Right cardiac atrium (tissue), 5 donors: ENCODE measurements at regions of chr16 and their contacts with region 1.

Region 1: DNA sequence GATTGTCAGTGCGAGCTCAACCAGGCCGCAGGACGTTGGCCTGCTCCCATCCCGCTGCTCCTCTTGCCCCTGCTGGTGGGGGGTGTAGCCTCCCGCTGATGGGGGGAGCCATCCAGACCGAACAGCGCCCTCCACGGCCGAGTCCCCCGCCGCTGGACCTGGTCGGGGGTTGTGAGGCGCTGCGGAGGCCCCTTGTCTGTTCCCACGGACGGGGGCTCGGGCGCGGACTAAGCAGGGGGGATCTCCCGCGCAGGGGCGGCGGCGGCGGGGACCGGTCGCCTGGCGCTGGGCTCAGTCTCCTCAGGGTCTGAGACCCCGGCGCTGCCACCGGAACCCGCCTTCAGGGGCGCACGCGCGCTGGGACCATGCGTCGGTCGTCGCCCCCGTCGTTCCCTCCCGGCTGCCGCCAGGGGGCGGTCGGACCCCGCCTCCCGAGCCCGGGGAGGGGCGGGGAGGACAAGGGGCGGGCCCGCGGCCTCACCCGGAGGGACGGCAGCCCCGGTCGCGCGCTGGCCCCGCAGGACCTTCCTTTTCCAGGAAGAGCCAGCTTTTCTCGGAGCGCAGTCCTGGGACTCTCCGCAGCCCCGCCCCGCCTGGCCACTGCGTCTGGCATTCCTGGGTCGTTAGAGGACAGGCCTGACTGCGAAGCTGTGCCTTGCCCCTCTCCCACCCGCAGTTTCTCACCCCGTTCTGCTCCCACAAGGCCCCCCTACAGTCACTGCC is 6.3 kb upstream of the IL32 start:
- DNase-seq: peak; percentile 93 to 97 (median 96)
- ATAC-seq: peak; percentile 95
- H3K4me3 ChIP-seq: peak overlapping the region; percentile 56
- H3K27ac ChIP-seq: peak overlapping the region; percentile 74
- H3K4me1 ChIP-seq: peaks cover 5% of the 10 kb centered on the region
- H3K27me3 ChIP-seq: no peaks in the 10 kb centered on the region

Region 2: DNA sequence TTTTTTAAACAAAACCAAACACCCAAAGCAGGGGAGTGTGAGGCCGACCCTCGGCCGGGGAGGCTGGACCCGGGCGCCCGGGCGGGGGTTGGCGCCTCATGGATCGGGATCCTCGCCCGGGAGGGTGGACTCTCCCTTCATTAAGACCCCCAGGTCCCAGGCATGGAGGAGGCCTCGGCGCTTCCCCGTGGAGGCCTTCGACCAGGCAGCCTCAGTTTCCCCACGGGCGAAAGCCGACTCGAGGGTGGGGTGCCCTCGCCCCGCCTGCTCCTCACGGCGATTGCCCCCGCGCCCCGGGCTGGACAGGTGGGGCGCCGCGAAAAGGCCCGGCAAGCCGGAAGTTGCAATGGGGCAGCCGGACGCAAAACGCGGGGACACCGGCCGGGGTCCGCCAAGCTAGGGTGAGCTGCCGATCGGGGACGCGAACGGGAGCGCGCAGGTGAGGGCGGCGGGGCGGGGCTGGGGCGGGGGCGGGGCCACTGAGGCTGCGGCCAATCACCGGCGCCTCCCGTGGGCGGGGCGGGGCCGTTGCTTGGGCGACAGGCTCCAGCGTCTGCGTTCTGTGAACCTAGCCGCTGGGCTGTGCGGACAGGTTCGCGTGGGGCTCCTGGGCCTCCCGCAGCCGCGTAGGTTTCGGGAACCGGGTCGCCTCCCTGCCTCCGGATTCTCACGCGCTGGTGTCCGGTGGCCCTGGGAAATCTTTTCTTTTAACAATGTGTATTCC is 47.2 kb after region 1 on chr16:
- intact Hi-C with region 1: loop called in 2 of 4 experiments (anchors 5 to 10 kb)
- DNase-seq: peak; percentile 91 to 97 (median 96)
- ATAC-seq: peak; percentile 97
- H3K4me3 ChIP-seq: peak overlapping the region; percentile 70
- H3K27ac ChIP-seq: peak overlapping the region; percentile 87
- H3K4me1 ChIP-seq: peaks cover under 1% of the 10 kb centered on the region
- H3K27me3 ChIP-seq: no peaks in the 10 kb centered on the region

Region 3: GRCh38 chr16:3129137-3130131 is 70.3 kb after region 1 on chr16:
- intact Hi-C with region 1: loop called in 1 of 4 experiments (anchors 5 kb)
- DNase-seq: peak; percentile 64 to 86 (median 84)
- ATAC-seq: peak; percentile 74 to 76
- H3K4me3 ChIP-seq: peak overlapping the region; percentile 57
- H3K27ac ChIP-seq: peak overlapping the region; percentile 74
- H3K4me1 ChIP-seq: no peaks in the 10 kb centered on the region
- H3K27me3 ChIP-seq: no peaks in the 10 kb centered on the region